H1 (cell line): ENCODE measurements at regions of chr6 and their contacts with region 1.

Region 1: GRCh38 chr6:93801101-93801847 is 381.9 kb upstream of the EPHA7 start:
- DNase-seq: no peak
- H3K4me3 ChIP-seq: no peak overlapping the region
- H3K27ac ChIP-seq: no peak overlapping the region
- H3K4me1 ChIP-seq: peaks cover 0 to 4% (median 3%) of the 10 kb centered on the region in 4 experiments; a peak in 4 of 7 replicates
- H3K27me3 ChIP-seq: no peaks in the 10 kb centered on the region
- CTCF ChIP-seq: no peak
- EP300 ChIP-seq: no peak
- POLR2A ChIP-seq: no peak
- RAD21 ChIP-seq: no peak

Region 2: GRCh38 chr6:93819189-93819588 is 17.9 kb after region 1 on chr6:
- CTCF ChIA-PET with region 1: interaction called, 3 read pairs
- POLR2A ChIA-PET with region 1: interaction called, 28 read pairs
- DNase-seq: no peak
- H3K4me3 ChIP-seq: no peak overlapping the region
- H3K27ac ChIP-seq: no peak overlapping the region
- H3K4me1 ChIP-seq: peaks cover 0 to 8% (median 1%) of the 10 kb centered on the region in 4 experiments; a peak in 2 of 7 replicates
- H3K27me3 ChIP-seq: no peaks in the 10 kb centered on the region
- CTCF ChIP-seq: no peak
- EP300 ChIP-seq: no peak
- POLR2A ChIP-seq: peak; percentile 28 to 76; a peak in 2 of 3 replicates
- RAD21 ChIP-seq: no peak

Region 3: GRCh38 chr6:93859971-93860370 is 58.7 kb after region 1 on chr6:
- CTCF ChIA-PET with region 1: no interaction called
- POLR2A ChIA-PET with region 1: no interaction called
- DNase-seq: no peak
- H3K4me3 ChIP-seq: peak overlapping the region in 1 of 4 experiments; percentile 47; a peak in 3 of 8 replicates
- H3K27ac ChIP-seq: peak overlapping the region; percentile 75
- H3K4me1 ChIP-seq: peaks cover 0 to 20% (median 10%) of the 10 kb centered on the region in 4 experiments; a peak in 5 of 7 replicates
- H3K27me3 ChIP-seq: no peaks in the 10 kb centered on the region
- CTCF ChIP-seq: no peak
- EP300 ChIP-seq: no peak
- POLR2A ChIP-seq: no peak
- RAD21 ChIP-seq: no peak